HEK293 (cell line): ENCODE measurements at regions of chr5 and their contacts with region 1.

Region 1: DNA sequence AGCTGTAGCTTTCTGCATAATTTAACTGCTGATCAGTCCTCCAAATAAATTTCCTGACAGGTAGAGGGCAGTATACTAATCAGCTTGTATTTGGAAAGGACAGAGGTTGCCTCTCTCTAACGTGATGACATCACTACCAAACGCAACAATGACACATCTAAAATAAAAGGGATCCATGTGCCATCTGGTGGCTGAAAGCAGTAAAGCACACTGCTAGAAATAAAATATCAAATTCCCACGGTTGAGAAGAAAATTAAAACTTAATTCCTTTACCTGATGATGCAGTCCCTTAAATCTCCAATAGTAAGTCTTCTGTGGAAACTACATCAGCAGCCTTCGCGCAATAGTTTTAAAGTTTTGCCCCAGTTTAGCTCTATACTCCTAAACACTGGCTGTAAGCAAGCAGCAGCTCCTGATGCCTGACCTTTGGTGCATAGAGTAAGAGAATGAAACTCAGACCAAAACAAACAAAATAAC is 54.5 kb downstream of the DIAPH1 start:
- H3K4me3 ChIP-seq: no peak overlapping the region
- H3K27ac ChIP-seq: no peak overlapping the region
- H3K4me1 ChIP-seq: no peaks in the 10 kb centered on the region
- CTCF ChIP-seq: peak; percentile 76

Region 2: DNA sequence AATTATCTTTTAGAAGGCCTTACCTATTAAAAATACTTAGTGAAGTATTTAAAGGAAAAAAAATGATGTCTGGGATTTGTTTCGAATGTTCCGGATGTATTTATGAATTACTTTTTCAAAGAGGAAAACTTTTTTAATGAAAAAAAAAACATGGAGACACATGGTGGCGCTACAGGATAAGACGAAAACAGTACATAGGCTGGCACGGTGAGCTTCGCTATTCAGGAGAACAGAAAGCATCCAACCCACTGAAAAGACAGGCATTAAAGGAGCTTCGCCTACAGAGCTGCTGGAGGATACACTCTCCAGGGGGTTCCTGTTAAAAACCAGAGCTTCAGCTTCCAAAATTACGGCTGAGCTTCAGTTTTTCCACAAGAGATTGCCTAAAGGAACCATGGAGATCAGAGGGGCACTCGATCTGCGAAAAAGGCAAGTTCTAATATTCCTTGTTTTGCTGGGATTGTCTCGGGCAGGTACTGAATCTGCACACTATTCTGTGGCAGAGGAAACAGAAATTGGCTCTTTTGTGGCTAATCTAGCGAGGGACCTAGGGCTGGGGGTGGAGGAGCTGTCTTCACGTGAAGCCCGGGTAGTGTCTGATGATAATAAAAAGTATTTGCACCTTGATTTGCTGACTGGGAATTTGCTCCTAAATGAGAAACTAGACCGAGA is 341.0 kb before region 1 on chr5 and contains the start of gene PCDHB14:
- CTCF ChIA-PET with region 1: interaction called, 19 read pairs
- POLR2A ChIA-PET with region 1: no interaction called
- H3K4me3 ChIP-seq: peak within 1 kb of the TSS; percentile 4
- H3K27ac ChIP-seq: no peak within 1 kb of the TSS
- H3K4me1 ChIP-seq: no peaks in the 10 kb centered on the region; the same call in 1 of the 2 replicates
- CTCF ChIP-seq: no peak

Region 3: DNA sequence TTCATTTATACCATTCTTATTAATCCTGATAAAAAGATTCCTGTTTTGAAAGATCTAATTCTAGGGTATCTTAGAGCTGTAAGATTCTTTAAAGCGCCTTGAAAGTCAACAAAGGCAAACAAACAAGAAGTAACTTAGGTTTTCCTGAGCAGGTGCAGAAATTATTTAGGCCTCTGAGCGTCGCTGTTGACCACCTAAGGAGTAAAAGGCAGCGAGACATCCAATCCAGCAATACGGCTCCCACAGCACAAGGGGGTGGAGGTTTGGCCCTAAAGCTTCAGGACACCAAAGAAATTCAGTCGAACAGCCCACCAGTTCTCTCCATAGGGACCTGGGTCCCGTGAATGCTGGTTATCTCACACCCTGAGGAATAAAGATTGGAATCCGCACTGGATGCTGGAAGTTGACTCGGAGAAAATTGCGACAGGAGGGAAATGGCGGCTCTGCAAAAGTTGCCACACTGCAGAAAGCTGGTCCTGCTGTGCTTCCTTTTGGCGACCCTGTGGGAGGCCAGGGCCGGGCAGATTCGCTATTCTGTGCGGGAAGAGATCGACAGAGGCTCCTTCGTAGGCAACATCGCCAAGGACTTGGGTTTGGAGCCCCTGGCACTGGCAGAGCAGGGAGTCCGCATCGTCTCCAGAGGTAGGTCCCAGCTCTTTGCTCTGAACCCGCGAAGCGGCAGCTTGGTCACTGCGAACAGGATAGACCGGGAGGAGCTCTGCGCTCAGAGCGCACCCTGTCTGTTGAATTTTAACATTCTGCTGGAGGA is 225.5 kb before region 1 on chr5 and contains the start of gene PCDHGA2:
- CTCF ChIA-PET with region 1: interaction called, 20 read pairs
- POLR2A ChIA-PET with region 1: no interaction called
- H3K4me3 ChIP-seq: no peak within 1 kb of the TSS
- H3K27ac ChIP-seq: no peak within 1 kb of the TSS
- H3K4me1 ChIP-seq: no peaks in the 10 kb centered on the region
- CTCF ChIP-seq: no peak

Region 4: DNA sequence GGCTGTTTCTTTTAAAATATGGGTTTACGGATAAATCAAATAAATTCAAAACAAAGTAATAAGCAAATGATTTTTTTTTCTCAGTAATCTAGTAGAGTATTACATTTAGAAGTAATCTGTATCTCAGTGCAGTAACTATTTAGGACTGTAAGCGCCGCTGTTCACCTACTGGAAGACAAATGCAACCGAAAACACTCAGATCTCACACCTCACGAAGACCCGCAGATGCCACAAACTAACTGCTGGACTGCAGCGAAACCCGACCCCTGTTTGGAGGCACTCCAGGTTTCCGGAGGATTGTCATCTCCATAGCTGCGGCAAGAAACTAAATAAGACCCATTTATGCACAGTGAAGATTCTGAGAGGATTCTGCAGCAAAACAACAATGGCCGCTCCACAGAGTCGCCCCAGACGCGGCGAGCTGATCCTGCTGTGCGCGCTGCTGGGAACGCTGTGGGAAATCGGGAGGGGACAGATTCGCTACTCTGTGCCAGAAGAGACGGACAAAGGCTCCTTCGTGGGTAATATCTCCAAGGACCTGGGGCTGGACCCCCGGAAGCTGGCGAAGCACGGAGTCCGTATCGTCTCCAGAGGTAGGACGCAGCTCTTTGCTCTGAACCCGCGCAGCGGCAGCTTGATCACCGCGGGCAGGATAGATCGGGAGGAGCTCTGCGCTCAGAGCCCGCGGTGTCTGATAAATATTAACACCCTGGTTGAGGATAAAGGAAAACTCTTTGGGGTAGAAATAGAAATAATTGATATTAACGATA is 171.6 kb before region 1 on chr5 and contains the start of gene PCDHGA8:
- CTCF ChIA-PET with region 1: interaction called, 57 read pairs
- POLR2A ChIA-PET with region 1: no interaction called
- H3K4me3 ChIP-seq: no peak within 1 kb of the TSS
- H3K27ac ChIP-seq: no peak within 1 kb of the TSS
- H3K4me1 ChIP-seq: no peaks in the 10 kb centered on the region
- CTCF ChIP-seq: no peak

Region 5: GRCh38 chr5:141524604-141525597 is 39.4 kb before region 1 on chr5:
- CTCF ChIA-PET with region 1: interaction called, 19 read pairs
- POLR2A ChIA-PET with region 1: interaction called, 3 read pairs
- H3K4me3 ChIP-seq: no peak overlapping the region
- H3K27ac ChIP-seq: no peak overlapping the region
- H3K4me1 ChIP-seq: peaks cover 11% of the 10 kb centered on the region
- CTCF ChIP-seq: peak; percentile 98

Region 6: DNA sequence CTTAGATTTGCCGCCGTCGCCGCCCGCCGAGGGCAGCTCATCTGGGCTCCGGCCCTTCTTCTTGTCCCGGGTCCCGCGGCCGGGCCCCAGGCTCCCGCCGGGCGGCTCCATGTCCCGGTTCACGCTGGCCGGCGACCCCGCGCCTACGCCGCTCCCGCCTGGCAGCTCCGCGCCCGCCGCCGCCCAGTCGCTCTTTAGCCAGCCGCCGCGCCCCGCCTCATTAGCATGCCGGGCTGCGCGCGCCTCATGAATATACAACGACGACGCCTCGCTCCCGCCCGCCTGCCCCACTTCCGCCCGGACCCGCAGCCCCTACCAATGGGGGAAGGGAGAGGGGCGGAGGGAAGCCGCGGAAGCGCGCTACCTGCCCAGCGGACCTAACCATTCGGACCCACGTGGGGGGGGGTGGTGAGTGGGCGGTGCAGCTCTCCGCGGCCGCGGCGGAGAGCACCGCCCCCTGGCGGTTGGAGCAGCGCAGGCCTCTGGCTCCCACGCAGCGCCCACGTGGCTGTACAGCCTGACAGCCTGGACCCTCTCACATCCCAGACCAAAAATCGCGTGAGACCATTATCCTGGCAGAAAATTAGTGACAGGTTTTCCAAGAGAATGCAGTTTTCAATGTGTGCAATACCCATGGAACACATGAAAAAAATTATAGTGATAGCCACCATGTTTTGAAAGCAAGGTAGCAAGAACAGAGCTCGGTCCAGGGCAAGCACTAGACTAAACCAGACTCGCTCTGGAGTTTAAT is 54.7 kb after region 1 on chr5 and contains the start of gene DIAPH1:
- CTCF ChIA-PET with region 1: interaction called, 15 read pairs
- POLR2A ChIA-PET with region 1: interaction called, 3 read pairs
- H3K4me3 ChIP-seq: peak within 1 kb of the TSS; percentile 81
- H3K27ac ChIP-seq: peak within 1 kb of the TSS; percentile 78
- H3K4me1 ChIP-seq: peaks cover 19% of the 10 kb centered on the region; the same call in 1 of the 2 replicates
- CTCF ChIP-seq: peak; percentile 99

Region 7: GRCh38 chr5:141649131-141649607 is 84.9 kb after region 1 on chr5:
- CTCF ChIA-PET with region 1: no interaction called
- POLR2A ChIA-PET with region 1: no interaction called
- H3K4me3 ChIP-seq: no peak overlapping the region
- H3K27ac ChIP-seq: no peak overlapping the region
- H3K4me1 ChIP-seq: no peaks in the 10 kb centered on the region
- CTCF ChIP-seq: no peak